Right cardiac atrium (tissue), 5 donors: ENCODE measurements at regions of chr6 and their contacts with region 1.

Region 1: DNA sequence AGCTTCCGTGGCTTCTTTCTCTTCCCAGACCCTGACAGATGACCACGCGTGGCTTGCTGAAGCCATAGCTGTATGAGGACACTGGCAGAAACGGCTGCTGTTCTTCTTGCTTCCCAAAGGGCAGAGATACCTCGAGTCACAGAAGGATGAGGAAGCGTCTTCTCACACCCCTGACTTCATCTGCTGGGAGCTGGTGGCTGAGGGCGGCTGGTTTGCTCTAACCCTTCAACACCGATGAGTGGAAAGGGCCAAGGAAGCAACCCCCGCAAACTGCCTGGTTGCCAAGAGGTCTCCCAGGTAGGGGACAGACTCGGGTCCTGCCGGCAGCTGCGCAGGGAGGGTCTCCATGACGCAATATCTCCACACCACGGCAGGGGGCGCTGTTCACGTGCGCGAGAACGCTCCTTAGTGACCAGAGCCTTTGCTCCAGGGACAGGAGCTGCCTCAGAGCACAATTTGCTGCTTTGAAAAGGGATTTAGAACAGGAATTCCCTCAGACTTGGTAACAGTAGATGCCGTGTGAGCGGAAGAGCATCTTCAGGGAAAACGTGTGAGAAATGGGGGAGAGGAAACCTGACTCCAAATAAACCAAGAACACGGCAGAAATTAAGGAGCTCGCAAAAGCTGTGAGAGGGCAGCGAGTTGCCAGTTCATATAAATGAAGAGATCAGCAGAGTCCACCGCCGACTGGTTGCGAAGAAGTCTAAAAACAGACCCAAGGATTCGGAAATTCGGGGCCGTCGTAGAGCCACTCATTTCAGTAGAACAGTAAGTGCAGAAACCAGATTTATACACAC is 80.2 kb downstream of the ERMARD start:
- DNase-seq: peak; percentile 64 to 88 (median 86)
- ATAC-seq: peak; percentile 87 to 93
- H3K4me3 ChIP-seq: no peak overlapping the region
- H3K27ac ChIP-seq: no peak overlapping the region
- H3K4me1 ChIP-seq: no peaks in the 10 kb centered on the region
- H3K27me3 ChIP-seq: no peaks in the 10 kb centered on the region

Region 2: GRCh38 chr6:170295510-170296422 is 464.1 kb after region 1 on chr6:
- intact Hi-C with region 1: loop called in 2 of 4 experiments (anchors 5 to 10 kb)
- DNase-seq: peak in 2 of 3 donors; percentile 65 to 73
- ATAC-seq: peak; percentile 21 to 28
- H3K4me3 ChIP-seq: peak overlapping the region; percentile 38
- H3K27ac ChIP-seq: no peak overlapping the region
- H3K4me1 ChIP-seq: peaks cover 10% of the 10 kb centered on the region
- H3K27me3 ChIP-seq: no peaks in the 10 kb centered on the region

Region 3: GRCh38 chr6:170516783-170517616 is 685.4 kb after region 1 on chr6:
- intact Hi-C with region 1: loop called in 2 of 4 experiments (anchors 10 kb)
- DNase-seq: peak in 2 of 3 donors; percentile 19 to 63
- ATAC-seq: peak; percentile 72 to 79
- H3K4me3 ChIP-seq: no peak overlapping the region
- H3K27ac ChIP-seq: no peak overlapping the region
- H3K4me1 ChIP-seq: no peaks in the 10 kb centered on the region
- H3K27me3 ChIP-seq: no peaks in the 10 kb centered on the region